Calu3 (cell line): ENCODE measurements at regions of chr12 and their contacts with region 1.

Region 1: DNA sequence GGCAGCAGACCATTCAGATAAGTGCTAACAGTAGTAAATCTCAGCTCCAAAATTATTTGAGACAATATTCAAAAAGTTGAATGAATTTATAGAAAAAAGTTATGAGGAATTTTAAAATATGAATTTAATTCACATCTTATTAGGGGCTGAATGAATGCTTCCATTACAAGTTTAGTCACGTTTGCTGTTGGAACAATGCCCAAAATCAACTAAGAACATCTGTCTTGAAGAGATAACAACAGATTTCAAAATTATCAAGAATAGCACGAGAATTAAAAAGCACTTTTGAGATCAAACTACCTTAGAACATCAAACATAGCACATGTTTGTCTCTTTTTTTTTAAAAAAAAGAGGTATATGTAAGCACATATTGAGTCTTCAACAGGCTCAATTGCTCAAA is 115.4 kb upstream of the PPFIA2 start:
- DNase-seq: no peak
- H3K4me3 Mint-ChIP-seq: peak overlapping the region; percentile 49
- H3K27ac Mint-ChIP-seq: peak overlapping the region; percentile 86
- H3K4me1 Mint-ChIP-seq: peaks cover 29% of the 10 kb centered on the region
- H3K27me3 Mint-ChIP-seq: no peaks in the 10 kb centered on the region
- CTCF ChIP-seq: no peak

Region 2: GRCh38 chr12:81492131-81492720 is 382.4 kb before region 1 on chr12:
- CTCF ChIA-PET with region 1: no interaction called
- intact Hi-C with region 1: no loop called
- DNase-seq: no peak
- H3K4me3 Mint-ChIP-seq: no peak overlapping the region
- H3K27ac Mint-ChIP-seq: no peak overlapping the region
- H3K4me1 Mint-ChIP-seq: no peaks in the 10 kb centered on the region
- H3K27me3 Mint-ChIP-seq: no peaks in the 10 kb centered on the region
- CTCF ChIP-seq: no peak

Region 3: GRCh38 chr12:81835783-81836182 is 38.8 kb before region 1 on chr12:
- CTCF ChIA-PET with region 1: no interaction called
- intact Hi-C with region 1: no loop called
- DNase-seq: no peak
- H3K4me3 Mint-ChIP-seq: no peak overlapping the region
- H3K27ac Mint-ChIP-seq: no peak overlapping the region
- H3K4me1 Mint-ChIP-seq: no peaks in the 10 kb centered on the region
- H3K27me3 Mint-ChIP-seq: no peaks in the 10 kb centered on the region
- CTCF ChIP-seq: no peak

Region 4: DNA sequence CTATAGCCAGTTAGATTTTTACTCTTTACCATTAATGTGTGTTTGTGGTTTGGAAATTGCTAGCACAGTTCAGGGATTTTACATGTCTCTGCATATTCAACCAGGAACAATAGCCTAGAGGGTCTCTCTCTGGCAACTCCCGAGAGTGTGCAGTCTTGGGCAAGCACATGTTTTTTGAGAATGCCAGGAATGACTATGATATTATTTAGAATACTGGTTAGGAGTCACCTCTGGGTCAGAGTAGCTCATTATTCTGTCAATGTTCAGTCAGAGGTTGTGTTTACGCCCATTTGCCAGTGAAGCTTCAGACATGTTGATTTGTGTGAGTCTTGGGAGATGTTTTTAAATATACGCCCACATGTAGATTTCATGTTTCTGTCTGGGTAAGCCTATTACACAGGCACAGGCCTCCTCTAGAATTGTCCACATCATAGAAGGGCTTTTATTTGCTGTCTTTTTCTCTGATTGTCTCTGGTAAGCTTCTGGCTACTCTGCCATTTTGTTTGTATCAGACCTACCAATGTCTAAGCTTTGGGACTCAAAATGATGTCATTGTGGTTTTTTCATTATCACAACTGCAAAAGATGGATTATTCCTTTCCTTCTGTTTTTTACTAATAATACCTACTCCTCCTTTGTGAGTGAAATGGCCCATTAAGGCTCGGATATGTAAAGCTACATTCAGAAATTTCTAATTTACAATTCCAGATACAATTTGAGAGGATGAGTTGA is 87.7 kb after region 1 on chr12:
- CTCF ChIA-PET with region 1: no interaction called
- intact Hi-C with region 1: loop called (anchors 5 kb)
- DNase-seq: no peak
- H3K4me3 Mint-ChIP-seq: no peak overlapping the region
- H3K27ac Mint-ChIP-seq: no peak overlapping the region
- H3K4me1 Mint-ChIP-seq: no peaks in the 10 kb centered on the region
- H3K27me3 Mint-ChIP-seq: no peaks in the 10 kb centered on the region
- CTCF ChIP-seq: no peak

Region 5: DNA sequence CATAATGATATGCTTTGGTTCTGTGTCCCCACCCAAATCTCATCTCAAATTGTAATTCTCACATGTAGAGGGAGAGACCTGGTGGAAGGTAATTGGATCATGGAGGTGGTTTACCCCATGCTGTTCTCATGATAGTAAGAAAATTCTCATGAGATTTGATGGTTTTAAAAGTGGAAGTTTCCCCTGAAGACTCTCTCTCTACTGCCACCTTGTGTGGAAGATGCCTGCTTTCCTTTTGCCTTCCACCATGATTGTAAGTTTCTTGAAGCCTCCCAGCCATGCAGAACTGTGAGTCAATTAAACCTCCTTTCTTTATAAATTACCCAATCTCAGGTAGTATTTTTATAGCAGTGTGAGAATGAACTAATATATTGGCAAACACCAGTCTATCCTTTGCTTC is 144.9 kb after region 1 on chr12:
- CTCF ChIA-PET with region 1: no interaction called
- intact Hi-C with region 1: loop called (anchors 5 kb)
- DNase-seq: no peak
- H3K4me3 Mint-ChIP-seq: no peak overlapping the region
- H3K27ac Mint-ChIP-seq: no peak overlapping the region
- H3K4me1 Mint-ChIP-seq: peaks cover 11% of the 10 kb centered on the region
- H3K27me3 Mint-ChIP-seq: no peaks in the 10 kb centered on the region
- CTCF ChIP-seq: no peak

Region 6: DNA sequence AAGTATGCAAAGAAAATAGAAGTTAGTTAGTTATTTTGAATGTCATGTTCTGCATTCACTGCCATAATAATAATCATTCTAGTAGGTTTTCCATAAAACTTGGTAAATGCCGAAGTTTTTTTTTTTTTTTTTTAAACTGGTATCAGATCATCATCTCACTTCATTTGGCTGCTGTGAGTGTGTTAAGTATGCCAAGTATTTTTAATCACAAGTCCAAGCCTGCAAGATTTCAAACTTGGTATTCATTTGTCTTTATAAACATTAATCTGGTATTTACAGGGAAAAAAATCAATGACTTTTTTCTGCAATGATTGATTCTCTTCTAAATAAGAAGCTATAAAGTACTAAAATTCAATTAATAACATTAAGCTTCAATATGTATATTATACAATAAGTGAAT is 234.7 kb after region 1 on chr12:
- CTCF ChIA-PET with region 1: no interaction called
- intact Hi-C with region 1: loop called (anchors 10 kb)
- DNase-seq: no peak
- H3K4me3 Mint-ChIP-seq: no peak overlapping the region
- H3K27ac Mint-ChIP-seq: no peak overlapping the region
- H3K4me1 Mint-ChIP-seq: no peaks in the 10 kb centered on the region
- H3K27me3 Mint-ChIP-seq: no peaks in the 10 kb centered on the region
- CTCF ChIP-seq: no peak

Region 7: DNA sequence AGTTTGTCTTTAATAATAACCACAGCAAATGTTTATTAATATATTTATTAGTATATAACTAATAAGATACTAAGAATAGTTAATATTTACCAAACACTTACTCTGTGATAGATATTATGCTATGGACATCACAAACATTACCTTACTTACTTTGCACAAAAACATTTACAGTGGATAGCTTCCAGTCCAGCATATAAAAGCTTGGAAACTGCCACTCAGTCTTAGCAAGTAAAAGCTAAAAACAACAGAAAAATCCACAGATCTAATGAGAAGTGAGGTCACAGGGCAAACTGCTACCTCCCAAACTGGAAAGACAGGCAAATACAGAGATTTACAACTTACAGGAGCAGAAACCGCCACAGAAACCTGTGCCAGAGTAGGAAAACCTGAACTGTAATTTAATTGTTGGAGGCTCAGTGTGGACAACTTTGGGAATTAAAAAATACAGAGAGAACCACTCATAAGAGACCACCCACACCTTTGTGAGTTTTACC is 583.6 kb after region 1 on chr12:
- CTCF ChIA-PET with region 1: no interaction called
- intact Hi-C with region 1: no loop called
- DNase-seq: no peak
- H3K4me3 Mint-ChIP-seq: no peak overlapping the region
- H3K27ac Mint-ChIP-seq: no peak overlapping the region
- H3K4me1 Mint-ChIP-seq: peaks cover 27% of the 10 kb centered on the region
- H3K27me3 Mint-ChIP-seq: no peaks in the 10 kb centered on the region
- CTCF ChIP-seq: no peak